MCF 10A (cell line): ENCODE measurements at regions of chr6 and their contacts with region 1.

Region 1: GRCh38 chr6:10694302-10695085 is at the starts of genes C6orf52 and PAK1IP1:
- DNase-seq: peak; percentile 93
- H3K4me3 Mint-ChIP-seq: peak within 1 kb of the TSS; percentile 91
- H3K27ac Mint-ChIP-seq: peak within 1 kb of the TSS; percentile 100
- H3K4me1 Mint-ChIP-seq: peaks cover 5% of the 10 kb centered on the region
- H3K27me3 Mint-ChIP-seq: no peaks in the 10 kb centered on the region
- CTCF ChIP-seq: no peak
- total RNA-seq, gene C6orf52: 5.0 and 6.5 TPM in 2 replicates
- total RNA-seq, gene PAK1IP1: 27.0 and 38.1 TPM in 2 replicates

Region 2: GRCh38 chr6:10478187-10479040 is 216.1 kb before region 1 on chr6:
- CTCF ChIA-PET with region 1: interaction called, 9 read pairs
- POLR2A ChIA-PET with region 1: interaction called, 7 read pairs
- intact Hi-C with region 1: loop called (anchors 1 kb)
- DNase-seq: peak; percentile 65
- H3K4me3 Mint-ChIP-seq: no peak overlapping the region
- H3K27ac Mint-ChIP-seq: no peak overlapping the region
- H3K4me1 Mint-ChIP-seq: peaks cover 21% of the 10 kb centered on the region
- H3K27me3 Mint-ChIP-seq: no peaks in the 10 kb centered on the region
- CTCF ChIP-seq: peak; percentile 70

Region 3: DNA sequence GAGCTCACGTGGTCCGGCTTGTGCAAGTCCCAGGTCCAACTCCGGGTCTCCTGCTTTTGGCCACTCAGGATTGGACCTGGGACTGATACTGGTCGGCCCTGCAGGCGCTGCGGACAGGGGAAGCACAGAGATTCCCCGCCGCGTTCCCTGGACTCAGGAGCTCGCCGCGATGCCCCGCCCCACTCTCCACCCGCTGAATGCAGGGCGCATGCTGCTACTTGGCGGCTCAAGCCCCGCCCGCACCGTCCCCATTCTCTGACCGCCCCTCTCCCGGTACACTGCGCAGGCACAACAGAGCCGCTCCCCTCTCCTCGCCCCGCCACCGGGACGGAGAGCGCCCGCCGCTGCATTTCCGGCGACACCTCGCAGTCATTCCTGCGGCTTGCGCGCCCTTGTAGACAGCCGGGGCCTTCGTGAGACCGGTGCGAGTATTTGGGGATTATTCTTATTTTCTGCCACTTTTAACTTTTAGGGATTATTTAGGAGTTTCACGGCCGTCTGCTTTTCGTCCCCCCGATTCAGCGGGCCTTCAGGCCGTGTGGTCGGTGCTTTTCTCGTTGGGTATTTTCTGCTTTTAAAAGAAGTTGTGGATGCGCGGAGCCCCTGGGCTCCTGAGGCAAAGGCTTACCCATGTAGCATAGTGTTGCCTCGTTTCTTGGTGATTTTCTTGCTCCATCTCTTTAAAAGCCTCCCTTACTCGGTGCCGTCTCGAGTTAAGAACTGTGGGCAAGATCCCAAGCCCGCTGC is 28.5 kb after region 1 on chr6 and contains the start of gene TMEM14C:
- CTCF ChIA-PET with region 1: interaction called, 4 read pairs
- POLR2A ChIA-PET with region 1: interaction called, 79 read pairs
- intact Hi-C with region 1: loop called (anchors 1 kb)
- DNase-seq: peak; percentile 98
- H3K4me3 Mint-ChIP-seq: peak within 1 kb of the TSS; percentile 96
- H3K27ac Mint-ChIP-seq: peak within 1 kb of the TSS; percentile 97
- H3K4me1 Mint-ChIP-seq: peaks cover 27% of the 10 kb centered on the region
- H3K27me3 Mint-ChIP-seq: no peaks in the 10 kb centered on the region
- CTCF ChIP-seq: no peak
- total RNA-seq, gene TMEM14C: 159 and 160 TPM in 2 replicates

Region 4: GRCh38 chr6:10747251-10747972 is 52.9 kb after region 1 on chr6 and contains the start of gene TMEM14B:
- CTCF ChIA-PET with region 1: interaction called, 6 read pairs
- POLR2A ChIA-PET with region 1: interaction called, 41 read pairs
- intact Hi-C with region 1: no loop called
- DNase-seq: peak; percentile 97
- H3K4me3 Mint-ChIP-seq: peak within 1 kb of the TSS; percentile 95
- H3K27ac Mint-ChIP-seq: peak within 1 kb of the TSS; percentile 95
- H3K4me1 Mint-ChIP-seq: peaks cover 18% of the 10 kb centered on the region
- H3K27me3 Mint-ChIP-seq: no peaks in the 10 kb centered on the region
- CTCF ChIP-seq: no peak
- total RNA-seq, gene TMEM14B: 122 and 143 TPM in 2 replicates

Region 5: DNA sequence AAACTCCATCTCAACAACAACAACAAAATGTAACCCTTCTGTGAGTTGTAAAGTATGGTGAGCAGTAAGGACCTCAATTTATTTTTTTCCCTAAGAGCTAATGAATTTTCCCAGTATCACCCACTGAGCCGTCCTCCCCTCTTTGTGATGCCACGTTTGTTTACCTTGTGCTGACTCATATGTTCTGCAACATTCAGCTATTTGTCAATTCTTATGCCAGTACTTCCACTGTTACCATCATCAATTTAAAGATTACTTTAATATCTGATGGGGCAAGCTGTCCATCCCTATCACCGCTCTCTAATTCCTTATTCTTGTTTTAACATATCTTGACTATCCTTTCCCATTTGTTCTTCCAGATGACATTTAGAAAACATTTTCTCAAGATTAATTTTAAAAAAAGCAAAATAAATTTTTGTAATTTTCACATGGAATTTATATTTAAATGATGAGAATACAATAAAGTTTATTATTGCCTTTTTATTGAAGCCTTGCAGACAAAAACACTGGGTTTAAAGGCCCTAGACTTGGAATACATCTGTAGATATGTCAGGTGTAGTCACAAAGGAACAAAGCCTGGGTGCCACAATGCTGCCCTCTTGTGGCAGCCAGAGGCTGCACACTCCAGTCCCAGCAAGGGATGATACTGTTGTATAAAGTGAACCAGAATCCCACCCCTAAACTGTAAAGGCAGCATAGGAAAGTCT is 106.5 kb after region 1 on chr6:
- CTCF ChIA-PET with region 1: interaction called, 7 read pairs
- POLR2A ChIA-PET with region 1: interaction called, 7 read pairs
- intact Hi-C with region 1: loop called (anchors 1 kb)
- DNase-seq: peak; percentile 76
- H3K4me3 Mint-ChIP-seq: no peak overlapping the region
- H3K27ac Mint-ChIP-seq: peak overlapping the region; percentile 57
- H3K4me1 Mint-ChIP-seq: peaks cover 8% of the 10 kb centered on the region
- H3K27me3 Mint-ChIP-seq: no peaks in the 10 kb centered on the region
- CTCF ChIP-seq: peak; percentile 96

Region 6: DNA sequence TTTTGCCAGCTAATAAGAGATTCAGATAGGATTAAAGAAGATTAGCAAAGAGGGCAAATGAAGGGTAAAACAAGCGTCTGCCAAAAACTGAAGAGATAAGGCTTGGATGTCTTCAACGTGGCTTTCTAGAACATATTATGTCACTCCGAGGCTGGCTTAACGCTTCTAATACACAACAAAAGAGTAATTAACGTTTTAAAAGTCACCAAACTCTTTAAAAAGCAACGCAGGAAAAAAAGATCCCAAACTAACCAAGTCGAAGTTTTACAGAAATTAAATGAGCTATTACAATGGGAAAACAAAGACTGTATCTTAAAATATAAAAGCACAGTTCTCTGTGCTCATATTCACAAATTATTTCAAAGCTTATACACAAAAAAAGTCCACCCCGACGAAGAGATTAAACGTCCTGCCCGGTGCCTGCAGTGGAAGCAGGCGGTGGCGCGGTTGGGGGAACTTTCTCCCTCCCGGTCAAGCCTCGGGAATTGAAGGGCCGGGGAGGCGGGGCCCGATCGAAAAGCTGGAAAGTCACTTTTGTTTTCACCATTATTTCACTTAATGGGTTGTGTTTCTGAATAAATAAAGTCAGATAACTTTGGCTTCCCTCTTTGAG is 142.6 kb after region 1 on chr6:
- CTCF ChIA-PET with region 1: no interaction called
- POLR2A ChIA-PET with region 1: no interaction called
- intact Hi-C with region 1: no loop called
- DNase-seq: no peak
- H3K4me3 Mint-ChIP-seq: peak overlapping the region; percentile 74
- H3K27ac Mint-ChIP-seq: no peak overlapping the region
- H3K4me1 Mint-ChIP-seq: peaks cover 9% of the 10 kb centered on the region
- H3K27me3 Mint-ChIP-seq: peaks cover 60% of the 10 kb centered on the region
- CTCF ChIP-seq: no peak